Posterior cingulate gyrus (tissue), 11 donors: ENCODE measurements at regions of chr13 and their contacts with region 1.

Region 1: DNA sequence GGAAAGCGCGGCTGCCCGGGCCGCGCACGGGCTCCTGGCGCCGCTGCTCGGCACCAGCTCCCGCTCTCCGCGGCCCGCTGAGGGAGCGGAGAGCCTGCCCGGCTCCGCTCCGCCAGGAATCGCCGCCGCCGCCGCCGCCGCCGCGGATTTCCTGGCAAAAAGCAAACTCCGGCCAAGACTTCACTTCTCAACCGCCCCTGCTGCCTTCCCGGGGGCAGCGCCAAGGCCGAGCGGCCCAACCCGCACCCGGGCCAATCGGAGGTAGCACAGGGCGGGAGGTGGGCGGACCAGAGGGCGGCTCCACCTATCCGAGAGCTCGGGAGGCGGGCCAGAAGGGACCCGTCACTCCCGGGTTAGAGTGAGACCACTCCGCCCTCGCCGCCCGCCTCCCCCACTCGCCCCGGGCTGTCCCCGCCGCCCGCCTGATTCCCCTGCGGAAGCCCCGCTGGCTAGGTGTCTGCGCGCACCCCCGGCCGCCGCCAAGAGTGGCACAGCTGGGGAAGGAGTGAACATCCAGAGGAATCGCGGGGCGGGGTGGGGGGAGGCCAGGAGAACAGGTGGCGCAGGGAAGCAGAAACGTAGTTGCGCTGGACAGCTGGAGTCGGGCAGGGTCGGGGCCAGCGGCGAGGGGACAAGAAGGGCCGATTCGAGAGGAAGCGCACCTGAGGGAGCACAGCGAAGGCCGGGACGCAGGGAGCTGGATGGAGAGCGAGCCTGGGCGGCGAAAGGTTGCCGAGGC is at the start of gene LNX2:
- DNase-seq: peak; percentile 97 to 100 (median 99)

Region 2: GRCh38 chr13:27339299-27339698 is 281.2 kb before region 1 on chr13:
- intact Hi-C with region 1: no loop called
- DNase-seq: peak in 1 of 10 donors; percentile 72

Region 3: DNA sequence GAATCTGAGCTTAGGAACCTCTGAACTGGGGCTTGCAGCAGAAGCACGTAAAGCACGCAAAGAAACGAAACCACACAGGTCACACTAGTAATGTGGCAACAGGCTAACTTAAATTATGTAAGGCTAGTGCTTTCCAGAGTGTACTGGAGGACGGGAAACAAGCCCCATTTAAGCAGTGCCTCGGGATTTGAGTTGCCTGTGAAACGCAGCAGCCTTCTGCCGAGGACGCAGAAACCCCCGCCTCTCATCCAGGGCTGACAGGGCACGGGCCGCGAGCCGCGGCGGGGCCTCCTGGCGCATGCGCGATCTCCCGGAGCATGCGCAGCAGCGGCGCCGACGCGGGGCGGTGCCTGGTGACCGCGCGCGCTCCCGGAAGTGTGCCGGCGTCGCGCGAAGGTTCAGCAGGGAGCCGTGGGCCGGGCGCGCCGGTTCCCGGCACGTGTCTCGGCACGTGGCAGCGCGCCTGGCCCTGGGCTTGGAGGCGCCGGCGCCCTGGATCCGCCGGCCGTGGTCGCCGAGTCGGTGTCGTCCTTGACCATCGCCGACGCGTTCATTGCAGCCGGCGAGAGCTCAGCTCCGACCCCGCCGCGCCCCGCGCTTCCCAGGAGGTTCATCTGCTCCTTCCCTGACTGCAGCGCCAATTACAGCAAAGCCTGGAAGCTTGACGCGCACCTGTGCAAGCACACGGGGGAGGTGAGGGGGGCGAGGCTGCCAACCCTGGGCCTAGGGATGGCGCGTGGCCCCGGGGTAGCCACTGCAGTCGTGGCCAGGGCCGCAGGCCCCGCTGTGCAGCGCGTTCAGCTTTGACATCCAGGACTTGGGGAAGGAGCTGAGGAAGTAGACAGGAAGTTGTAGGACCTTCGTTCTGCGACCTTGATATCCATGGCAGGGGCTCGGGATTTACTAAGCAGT is 196.0 kb before region 1 on chr13 and contains the start of gene GTF3A:
- intact Hi-C with region 1: loop called (anchors 10 kb)
- DNase-seq: peak; percentile 62 to 97 (median 74)

Region 4: GRCh38 chr13:27449936-27450828 is 170.4 kb before region 1 on chr13 and contains the start of gene MTIF3:
- intact Hi-C with region 1: loop called (anchors 1 kb)
- DNase-seq: peak; percentile 88 to 99 (median 93)

Region 5: DNA sequence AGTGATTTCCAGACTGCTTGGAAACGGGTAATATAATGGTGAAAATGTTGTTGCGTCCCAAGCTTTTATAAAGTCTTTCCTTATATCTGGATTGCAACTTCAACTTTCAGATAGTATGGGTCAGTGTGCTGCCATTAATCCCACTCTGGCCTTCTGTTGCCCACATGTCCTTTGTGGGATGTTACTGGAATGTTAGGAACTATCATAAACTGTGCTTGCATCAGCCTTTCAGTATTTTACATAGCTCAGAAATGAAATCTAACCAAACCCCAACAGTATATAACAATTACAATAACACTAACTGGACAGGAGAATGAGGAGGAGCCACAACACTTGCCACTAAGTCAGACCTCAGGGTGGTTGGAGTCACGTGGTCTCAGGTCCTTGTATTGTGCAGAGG is 79.2 kb before region 1 on chr13:
- intact Hi-C with region 1: no loop called
- DNase-seq: no peak

Region 6: DNA sequence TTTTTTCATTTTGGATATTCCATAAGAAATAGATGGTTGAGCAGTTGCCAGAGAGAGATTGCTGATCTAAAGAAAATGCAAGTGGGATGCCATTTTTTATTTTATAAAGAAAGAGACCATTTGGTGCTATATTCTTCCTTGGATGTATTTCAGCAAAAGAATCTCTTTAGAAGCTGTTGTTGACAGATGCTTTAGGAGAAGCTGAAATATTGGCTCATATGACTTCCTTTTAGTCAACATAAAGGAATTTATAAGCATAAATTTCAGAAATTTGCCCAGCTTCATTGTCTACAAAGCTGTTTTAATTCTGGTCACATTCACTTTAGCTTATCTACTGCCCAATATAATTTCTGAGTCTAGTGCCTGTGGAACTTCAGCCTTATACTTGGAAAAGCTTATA is 38.0 kb after region 1 on chr13:
- intact Hi-C with region 1: no loop called
- DNase-seq: no peak